HepG2 (cell line): ENCODE measurements at regions of chr19 and their contacts with region 1.

Region 1: GRCh38 chr19:44476559-44477408 is 23.5 kb downstream of the ZNF180 start:
- DNase-seq: peak; percentile 16
- ATAC-seq: no peak
- H3K4me3 ChIP-seq: no peak overlapping the region
- H3K27ac ChIP-seq: no peak overlapping the region
- H3K4me1 ChIP-seq: no peaks in the 10 kb centered on the region
- H3K27me3 ChIP-seq: no peaks in the 10 kb centered on the region
- CTCF ChIP-seq: no peak
- EP300 ChIP-seq: no peak
- POLR2A ChIP-seq: no peak
- RAD21 ChIP-seq: no peak

Region 2: GRCh38 chr19:43872547-43873336 is 604.0 kb before region 1 on chr19:
- CTCF ChIA-PET with region 1: no interaction called
- POLR2A ChIA-PET with region 1: no interaction called
- in situ Hi-C with region 1: loop called (anchors 25 kb)
- intact Hi-C with region 1: no loop called
- DNase-seq: no peak
- ATAC-seq: no peak
- H3K4me3 ChIP-seq: no peak overlapping the region
- H3K27ac ChIP-seq: no peak overlapping the region
- H3K4me1 ChIP-seq: no peaks in the 10 kb centered on the region
- H3K27me3 ChIP-seq: no peaks in the 10 kb centered on the region
- CTCF ChIP-seq: no peak
- EP300 ChIP-seq: no peak
- POLR2A ChIP-seq: no peak
- RAD21 ChIP-seq: no peak